MCF 10A (cell line): ENCODE measurements at regions of chr5 and their contacts with region 1.

Region 1: DNA sequence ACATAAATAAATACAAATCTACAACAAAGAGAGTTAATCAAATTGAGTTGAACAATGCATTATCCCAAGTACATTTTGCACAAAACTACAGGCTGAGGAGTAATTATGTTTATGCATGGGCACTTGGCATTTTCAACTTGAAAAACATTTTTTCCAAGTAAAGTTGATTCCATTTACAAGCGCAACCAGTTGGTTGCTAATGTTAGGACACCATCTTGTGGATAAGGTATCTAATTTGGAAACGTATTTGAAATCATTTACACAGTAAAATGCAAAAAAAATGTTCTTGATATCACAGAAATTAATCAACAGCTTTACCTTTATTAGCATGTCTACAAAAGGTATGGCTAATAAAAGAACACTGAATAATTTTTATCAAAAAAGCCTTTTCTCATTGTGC is 18.8 kb downstream of the FTMT start:
- DNase-seq: peak; percentile 28
- H3K4me3 Mint-ChIP-seq: no peak overlapping the region
- H3K27ac Mint-ChIP-seq: no peak overlapping the region
- H3K4me1 Mint-ChIP-seq: peaks cover 1% of the 10 kb centered on the region
- H3K27me3 Mint-ChIP-seq: no peaks in the 10 kb centered on the region
- CTCF ChIP-seq: peak; percentile 33

Region 2: GRCh38 chr5:120817044-120817985 is 1053.2 kb before region 1 on chr5:
- CTCF ChIA-PET with region 1: interaction called, 21 read pairs
- POLR2A ChIA-PET with region 1: no interaction called
- intact Hi-C with region 1: loop called (anchors 1 kb)
- DNase-seq: peak; percentile 50
- H3K4me3 Mint-ChIP-seq: no peak overlapping the region
- H3K27ac Mint-ChIP-seq: no peak overlapping the region
- H3K4me1 Mint-ChIP-seq: no peaks in the 10 kb centered on the region
- H3K27me3 Mint-ChIP-seq: no peaks in the 10 kb centered on the region
- CTCF ChIP-seq: peak; percentile 72

Region 3: GRCh38 chr5:121630402-121630801 is 240.1 kb before region 1 on chr5:
- CTCF ChIA-PET with region 1: interaction called, 7 read pairs
- POLR2A ChIA-PET with region 1: no interaction called
- intact Hi-C with region 1: loop called (anchors 1 kb)
- DNase-seq: peak; percentile 51
- H3K4me3 Mint-ChIP-seq: no peak overlapping the region
- H3K27ac Mint-ChIP-seq: no peak overlapping the region
- H3K4me1 Mint-ChIP-seq: peaks cover 16% of the 10 kb centered on the region
- H3K27me3 Mint-ChIP-seq: no peaks in the 10 kb centered on the region
- CTCF ChIP-seq: peak; percentile 36